GM12878 (cell line): ENCODE measurements at regions of chr2 and their contacts with region 1.

Region 1: GRCh38 chr2:181354626-181355025 is 102.6 kb upstream of the ITGA4 start:
- DNase-seq: no peak
- ATAC-seq: peak; percentile 46; the same call in 2 of the 3 replicates
- H3K4me3 ChIP-seq: no peak overlapping the region
- H3K27ac ChIP-seq: no peak overlapping the region
- H3K4me1 ChIP-seq: peaks cover 5% of the 10 kb centered on the region
- H3K27me3 ChIP-seq: no peaks in the 10 kb centered on the region
- CTCF ChIP-seq: no peak
- EP300 ChIP-seq: no peak
- POLR2A ChIP-seq: no peak
- RAD21 ChIP-seq: no peak

Region 2: GRCh38 chr2:181341855-181342600 is 12.6 kb before region 1 on chr2:
- CTCF ChIA-PET with region 1: interaction called, 4 read pairs
- POLR2A ChIA-PET with region 1: interaction called, 3 read pairs
- RAD21 ChIA-PET with region 1: interaction called, 4 read pairs
- SMC1A ChIA-PET with region 1: interaction called, 11 read pairs
- in situ Hi-C with region 1: no loop called
- intact Hi-C with region 1: no loop called
- DNase-seq: no peak
- ATAC-seq: no peak
- H3K4me3 ChIP-seq: no peak overlapping the region
- H3K27ac ChIP-seq: no peak overlapping the region
- H3K4me1 ChIP-seq: no peaks in the 10 kb centered on the region
- H3K27me3 ChIP-seq: no peaks in the 10 kb centered on the region
- CTCF ChIP-seq: no peak
- EP300 ChIP-seq: no peak
- POLR2A ChIP-seq: no peak
- RAD21 ChIP-seq: no peak

Region 3: DNA sequence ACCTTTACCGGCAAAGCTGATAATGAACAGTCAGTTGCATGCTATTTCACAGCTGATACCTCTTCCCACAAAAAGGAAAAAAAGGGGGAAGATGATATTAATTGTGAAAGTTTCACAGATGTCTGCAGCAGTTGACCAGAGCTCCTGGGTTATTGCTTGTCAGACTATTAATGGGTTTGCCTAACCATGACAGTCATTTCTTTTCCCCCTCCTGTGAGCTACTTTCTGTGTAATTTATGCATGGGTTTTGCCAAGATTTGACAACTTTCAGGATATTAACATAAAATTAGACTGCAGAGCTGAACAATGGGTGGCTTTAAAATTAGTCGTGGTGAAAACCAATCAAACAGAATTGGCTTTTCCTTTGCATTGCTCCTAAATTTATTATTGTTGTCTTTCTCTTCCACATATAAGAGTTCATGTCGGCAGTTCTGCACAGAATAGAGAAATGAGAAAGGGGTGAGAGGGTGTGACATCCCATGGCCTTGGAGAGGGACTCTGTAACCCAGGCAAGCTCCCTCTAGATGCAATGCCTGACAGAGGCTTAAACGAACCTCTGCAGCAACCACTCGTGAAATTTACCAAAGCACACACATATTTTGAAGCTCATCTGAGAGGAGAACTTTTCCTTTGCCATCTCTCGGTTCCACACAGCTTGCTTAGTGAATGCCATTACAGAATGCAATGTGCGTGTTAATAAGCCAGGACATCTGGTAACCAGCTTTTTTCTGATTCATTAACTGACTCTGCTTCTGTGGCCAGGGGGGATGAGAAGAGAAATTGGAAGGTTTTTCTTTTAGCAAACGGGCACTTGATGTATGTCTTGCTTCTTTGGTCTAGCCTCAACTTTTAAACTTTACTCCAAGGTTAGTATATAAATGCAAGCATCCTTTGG is 20.4 kb after region 1 on chr2:
- CTCF ChIA-PET with region 1: interaction called, 7 read pairs
- POLR2A ChIA-PET with region 1: interaction called, 5 read pairs
- RAD21 ChIA-PET with region 1: interaction called, 5 read pairs
- SMC1A ChIA-PET with region 1: interaction called, 14 read pairs
- in situ Hi-C with region 1: no loop called
- intact Hi-C with region 1: no loop called
- DNase-seq: peak; percentile 42
- ATAC-seq: peak; percentile 87
- H3K4me3 ChIP-seq: peak overlapping the region; percentile 4; the same call in 1 of the 2 replicates
- H3K27ac ChIP-seq: peak overlapping the region; percentile 38; the same call in 1 of the 2 replicates
- H3K4me1 ChIP-seq: peaks cover 29% of the 10 kb centered on the region
- H3K27me3 ChIP-seq: no peaks in the 10 kb centered on the region
- CTCF ChIP-seq: no peak
- EP300 ChIP-seq: no peak
- POLR2A ChIP-seq: no peak
- RAD21 ChIP-seq: no peak

Region 4: DNA sequence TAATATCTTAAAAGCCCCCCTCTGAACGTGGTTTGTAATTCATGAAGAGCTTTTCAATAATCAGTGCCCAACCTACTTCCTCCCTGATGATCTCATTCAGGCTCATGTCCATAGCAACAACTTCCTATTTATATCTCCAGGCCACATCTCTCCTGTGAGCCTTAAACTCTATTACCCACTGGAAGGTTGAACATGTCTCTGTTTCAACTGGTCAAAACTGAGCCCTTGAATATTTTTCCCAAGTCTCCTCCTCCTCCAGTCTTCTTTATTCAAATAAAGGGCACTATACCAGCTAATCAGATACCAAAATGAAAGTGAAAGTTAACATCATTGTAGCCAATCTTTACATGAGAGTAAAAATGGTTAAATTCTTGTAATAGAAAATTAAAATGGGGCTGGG is 38.8 kb after region 1 on chr2:
- CTCF ChIA-PET with region 1: no interaction called
- POLR2A ChIA-PET with region 1: interaction called, 3 read pairs
- RAD21 ChIA-PET with region 1: interaction called, 3 read pairs
- SMC1A ChIA-PET with region 1: interaction called, 12 read pairs
- in situ Hi-C with region 1: no loop called
- intact Hi-C with region 1: no loop called
- DNase-seq: no peak
- ATAC-seq: peak; percentile 77
- H3K4me3 ChIP-seq: no peak overlapping the region; the same call in 1 of the 2 replicates
- H3K27ac ChIP-seq: no peak overlapping the region
- H3K4me1 ChIP-seq: peaks cover 2% of the 10 kb centered on the region; the same call in 1 of the 2 replicates
- H3K27me3 ChIP-seq: no peaks in the 10 kb centered on the region
- CTCF ChIP-seq: no peak
- EP300 ChIP-seq: no peak
- POLR2A ChIP-seq: no peak
- RAD21 ChIP-seq: no peak